Heart right ventricle (tissue), 16 donors: ENCODE measurements at regions of chr7 and their contacts with region 1.

Region 1: DNA sequence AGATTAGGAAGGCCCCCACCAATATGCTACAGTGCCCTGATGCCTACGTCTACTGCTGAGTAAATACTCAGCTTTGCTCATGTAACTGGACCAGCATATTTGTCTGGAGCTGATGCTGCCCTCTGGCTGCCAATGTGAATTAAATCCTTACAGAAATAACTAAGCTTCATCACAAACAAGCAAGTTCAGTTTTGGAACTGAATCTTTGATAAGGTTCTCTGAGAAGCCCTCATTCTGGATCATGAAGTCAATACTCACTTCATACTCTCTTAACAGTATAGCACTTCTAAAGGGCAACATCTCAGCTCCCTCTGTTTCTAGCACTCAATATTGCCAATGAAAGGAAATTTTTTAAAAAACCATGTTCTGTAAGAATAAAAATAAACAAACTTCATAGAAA is 246.7 kb downstream of the ETV1 start:
- DNase-seq: peak in 1 of 2 donors; percentile 18
- ATAC-seq: peak in 7 of 8 donors; percentile 59 to 81 (median 70)
- H3K4me3 ChIP-seq: no peak overlapping the region
- H3K27ac ChIP-seq: no peak overlapping the region
- H3K4me1 ChIP-seq: peaks cover 0 to 16% (median 10%) of the 10 kb centered on the region in 9 donors
- H3K27me3 ChIP-seq: no peaks in the 10 kb centered on the region
- CTCF ChIP-seq: peak; percentile 10 to 65 (median 52)

Region 2: DNA sequence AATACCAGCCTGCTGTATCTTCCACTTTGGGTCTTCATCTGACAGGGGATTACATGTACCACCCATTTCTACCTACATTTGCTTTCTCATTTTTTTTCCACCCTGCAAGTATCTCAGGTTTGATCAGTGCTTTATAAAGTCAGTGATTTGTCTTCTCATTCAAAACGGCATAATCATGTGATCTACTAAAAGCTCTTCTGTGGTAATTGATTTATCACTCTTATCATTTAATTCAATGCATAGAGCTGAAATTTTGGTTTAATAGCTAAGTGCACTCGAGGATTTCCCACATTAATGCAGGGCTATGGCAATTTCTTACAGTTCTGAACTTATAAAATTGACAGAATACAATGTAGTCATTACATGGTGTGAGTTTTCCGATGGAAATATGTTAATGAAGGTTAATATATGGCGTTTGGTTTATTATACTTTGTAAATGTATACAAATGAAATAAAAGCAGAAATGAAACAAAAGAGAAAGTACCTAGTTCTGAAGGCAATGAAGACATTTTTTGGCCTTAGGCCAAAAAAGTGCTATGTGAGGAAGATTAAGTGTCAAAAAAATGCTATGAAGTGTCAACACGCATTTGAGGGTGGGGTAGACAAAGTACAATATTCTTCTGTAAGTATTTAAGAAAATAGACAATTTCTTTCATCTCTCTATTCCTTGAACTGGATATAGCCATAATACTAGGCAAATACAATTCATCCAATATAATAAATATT is 210.6 kb before region 1 on chr7:
- intact Hi-C with region 1: loop called in 3 of 10 experiments (anchors 5 to 10 kb)
- DNase-seq: no peak
- ATAC-seq: no peak
- H3K4me3 ChIP-seq: no peak overlapping the region
- H3K27ac ChIP-seq: no peak overlapping the region
- H3K4me1 ChIP-seq: no peaks in the 10 kb centered on the region
- H3K27me3 ChIP-seq: no peaks in the 10 kb centered on the region
- CTCF ChIP-seq: no peak

Region 3: GRCh38 chr7:13790611-13791010 is 47.8 kb after region 1 on chr7:
- intact Hi-C with region 1: no loop called
- DNase-seq: no peak
- ATAC-seq: no peak
- H3K4me3 ChIP-seq: no peak overlapping the region
- H3K27ac ChIP-seq: no peak overlapping the region
- H3K4me1 ChIP-seq: no peaks in the 10 kb centered on the region
- H3K27me3 ChIP-seq: no peaks in the 10 kb centered on the region
- CTCF ChIP-seq: no peak

Region 4: DNA sequence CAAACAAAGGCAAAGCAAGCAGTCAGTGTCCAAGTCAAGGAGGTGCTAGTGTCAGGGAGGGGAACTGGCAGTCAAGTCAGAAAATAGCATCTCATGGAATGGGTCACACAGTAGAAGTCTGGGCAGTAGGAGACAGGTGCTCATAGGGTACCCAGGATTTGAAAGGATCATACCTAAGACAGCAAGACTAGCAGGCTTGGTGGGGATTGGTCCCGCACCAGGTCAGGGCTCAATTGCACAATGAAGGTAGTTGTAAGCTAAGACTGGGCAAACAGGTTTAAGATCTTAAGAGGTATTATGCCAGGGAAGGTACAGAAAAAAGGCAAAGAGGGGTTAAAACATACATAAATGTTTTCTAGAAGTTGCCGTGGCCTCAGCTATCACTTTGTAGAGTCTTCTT is 428.1 kb after region 1 on chr7:
- intact Hi-C with region 1: no loop called
- DNase-seq: no peak
- ATAC-seq: no peak
- H3K4me3 ChIP-seq: no peak overlapping the region
- H3K27ac ChIP-seq: no peak overlapping the region
- H3K4me1 ChIP-seq: no peaks in the 10 kb centered on the region
- H3K27me3 ChIP-seq: no peaks in the 10 kb centered on the region
- CTCF ChIP-seq: no peak